Cardiac septum (tissue), 1 donor: ENCODE measurements at regions of chr5 and their contacts with region 1.

Region 1: GRCh38 chr5:10577371-10578292 is 13.8 kb downstream of the ANKRD33B start:
- DNase-seq: no peak

Region 2: GRCh38 chr5:10601246-10602030 is 23.8 kb after region 1 on chr5:
- intact Hi-C with region 1: loop called (anchors 1 kb)
- DNase-seq: peak; percentile 90

Region 3: GRCh38 chr5:10607666-10608073 is 30.0 kb after region 1 on chr5:
- intact Hi-C with region 1: loop called (anchors 2 kb)
- DNase-seq: no peak

Region 4: GRCh38 chr5:10946050-10946449 is 368.4 kb after region 1 on chr5:
- intact Hi-C with region 1: no loop called
- DNase-seq: no peak